Endothelial cell of umbilical vein (primary cell): ENCODE measurements at regions of chr14 and their contacts with region 1.

Region 1: DNA sequence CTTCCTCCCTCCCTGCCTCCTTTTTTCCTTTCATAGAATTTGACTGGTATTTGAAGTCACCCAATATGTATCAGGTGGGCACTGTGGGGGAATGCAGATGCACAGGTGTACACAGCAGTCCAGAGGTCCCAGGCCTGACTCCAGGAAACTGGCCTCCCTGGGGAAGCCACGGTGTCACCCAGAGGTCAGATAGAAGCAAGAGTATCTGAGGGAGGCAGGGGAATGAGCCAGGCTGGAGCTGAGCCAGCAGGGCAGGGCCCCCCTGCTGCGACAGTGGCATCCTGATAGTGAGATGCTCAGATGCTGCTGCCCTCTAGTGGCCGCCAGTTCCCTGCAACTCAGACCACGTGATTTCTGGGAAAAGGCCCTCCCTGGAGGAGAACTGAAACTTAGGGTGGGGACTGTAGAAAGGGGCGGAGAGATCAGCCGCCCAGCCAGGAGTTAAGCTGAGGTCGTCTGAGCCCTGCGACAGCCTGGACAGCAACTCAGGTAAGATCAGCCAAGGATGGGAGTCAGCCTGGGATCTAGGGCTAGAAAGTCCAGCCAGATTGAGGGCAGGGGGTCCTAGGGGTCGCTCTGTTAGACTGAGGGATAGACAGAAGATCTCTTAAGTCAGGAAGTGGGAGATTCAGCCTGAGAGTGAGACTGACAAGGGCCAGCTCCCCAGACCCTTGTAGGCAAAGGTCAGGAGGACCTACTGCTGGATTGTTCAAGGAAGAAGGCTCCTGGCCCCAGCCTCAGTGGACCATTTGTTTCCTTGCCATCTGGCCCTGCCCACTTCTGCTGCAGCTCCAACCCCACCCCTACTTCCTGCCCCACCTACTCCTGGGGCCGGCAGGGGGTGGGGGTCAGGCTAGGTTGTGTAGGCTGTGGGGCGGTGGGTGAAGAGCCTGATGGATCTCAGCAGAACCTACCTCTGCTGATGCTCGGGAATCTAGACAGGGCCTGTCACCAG is at the start of gene IRF9:
- DNase-seq: peak; percentile 97
- H3K4me3 ChIP-seq: peak within 1 kb of the TSS; percentile 37 to 79 (median 67)
- H3K27ac ChIP-seq: peak within 1 kb of the TSS; percentile 78
- H3K4me1 ChIP-seq: peaks cover 16% of the 10 kb centered on the region
- H3K27me3 ChIP-seq: no peaks in the 10 kb centered on the region
- CTCF ChIP-seq: peak; percentile 95 to 97
- POLR2A ChIP-seq: peak; percentile 88
- total RNA-seq, gene IRF9: 33.2 and 46.1 TPM in 2 replicates

Region 2: GRCh38 chr14:24086193-24086955 is 74.8 kb before region 1 on chr14:
- CTCF ChIA-PET with region 1: interaction called, 8 read pairs
- POLR2A ChIA-PET with region 1: no interaction called
- dilution Hi-C with region 1: no loop called
- intact Hi-C with region 1: loop called (anchors 1 kb)
- DNase-seq: no peak
- H3K4me3 ChIP-seq: no peak overlapping the region
- H3K27ac ChIP-seq: no peak overlapping the region
- H3K4me1 ChIP-seq: no peaks in the 10 kb centered on the region
- H3K27me3 ChIP-seq: peaks cover 14 to 20% of the 10 kb centered on the region in 2 experiments
- CTCF ChIP-seq: no peak
- POLR2A ChIP-seq: no peak

Region 3: GRCh38 chr14:24114536-24115450 is 46.3 kb before region 1 on chr14 and contains the starts of genes DCAF11 and NRL:
- CTCF ChIA-PET with region 1: interaction called, 16 read pairs
- POLR2A ChIA-PET with region 1: no interaction called
- dilution Hi-C with region 1: no loop called
- intact Hi-C with region 1: loop called (anchors 1 kb)
- DNase-seq: peak; percentile 100
- H3K4me3 ChIP-seq: peak within 1 kb of the TSS; percentile 46 to 92 (median 84)
- H3K27ac ChIP-seq: peak within 1 kb of the TSS; percentile 88
- H3K4me1 ChIP-seq: peaks cover 13% of the 10 kb centered on the region
- H3K27me3 ChIP-seq: no peaks in the 10 kb centered on the region
- CTCF ChIP-seq: no peak
- POLR2A ChIP-seq: peak; percentile 39
- total RNA-seq, gene DCAF11: 32.1 and 38.5 TPM in 2 replicates
- total RNA-seq, gene NRL: 0.62 and 0.71 TPM in 2 replicates

Region 4: DNA sequence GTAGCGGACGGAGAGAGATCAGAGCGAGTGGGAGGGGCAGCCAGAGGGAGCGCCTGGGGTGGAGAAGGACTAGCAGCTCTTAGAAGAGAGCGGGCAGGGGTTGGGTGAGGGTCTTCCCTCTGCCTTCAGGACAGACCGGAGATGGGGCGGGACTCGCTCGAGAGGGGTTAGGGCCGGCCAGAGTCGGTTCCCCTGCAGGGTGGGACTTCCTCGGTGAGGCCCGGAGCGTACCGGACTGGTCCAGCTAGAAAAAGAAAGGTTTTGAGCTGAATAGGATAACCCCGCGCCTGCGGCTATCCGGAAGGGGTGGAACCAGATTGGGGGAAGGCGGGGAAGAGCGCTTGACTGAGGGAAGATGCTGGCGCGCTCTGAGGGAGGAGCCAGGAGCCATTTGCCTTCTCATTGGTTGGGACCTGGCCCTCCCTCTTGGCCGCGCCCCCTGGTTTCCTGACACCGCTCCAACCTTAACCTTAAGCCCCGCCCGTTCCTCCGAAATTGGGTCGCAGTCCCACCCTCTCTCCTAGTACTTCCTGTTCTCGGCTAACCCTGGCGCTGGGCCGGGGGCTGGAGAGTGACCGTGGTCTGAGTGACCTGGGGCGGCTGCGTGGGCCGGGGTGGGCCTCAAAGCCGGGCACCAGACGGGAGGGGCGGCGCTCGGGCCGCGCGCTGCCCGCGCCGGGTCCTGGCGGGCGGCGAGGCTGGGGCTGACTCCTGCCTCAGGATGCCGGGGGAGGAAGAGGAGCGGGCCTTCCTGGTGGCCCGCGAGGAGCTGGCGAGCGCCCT is 14.0 kb before region 1 on chr14 and contains the start of gene RNF31:
- CTCF ChIA-PET with region 1: interaction called, 63 read pairs
- POLR2A ChIA-PET with region 1: interaction called, 6 read pairs
- dilution Hi-C with region 1: no loop called
- intact Hi-C with region 1: loop called (anchors 1 kb)
- DNase-seq: peak; percentile 97
- H3K4me3 ChIP-seq: peak within 1 kb of the TSS; percentile 59 to 86 (median 79)
- H3K27ac ChIP-seq: peak within 1 kb of the TSS; percentile 52
- H3K4me1 ChIP-seq: peaks cover 17% of the 10 kb centered on the region
- H3K27me3 ChIP-seq: no peaks in the 10 kb centered on the region
- CTCF ChIP-seq: no peak
- POLR2A ChIP-seq: peak; percentile 75
- total RNA-seq, gene RNF31: 66.5 and 69.7 TPM in 2 replicates

Region 5: GRCh38 chr14:24215495-24216344 is 54.6 kb after region 1 on chr14 and contains the start of gene MDP1:
- CTCF ChIA-PET with region 1: interaction called, 5 read pairs
- POLR2A ChIA-PET with region 1: no interaction called
- dilution Hi-C with region 1: no loop called
- intact Hi-C with region 1: loop called (anchors 1 kb)
- DNase-seq: peak; percentile 91
- H3K4me3 ChIP-seq: peak within 1 kb of the TSS; percentile 57 to 69 (median 64)
- H3K27ac ChIP-seq: peak within 1 kb of the TSS; percentile 61
- H3K4me1 ChIP-seq: peaks cover 11% of the 10 kb centered on the region
- H3K27me3 ChIP-seq: no peaks in the 10 kb centered on the region
- CTCF ChIP-seq: peak; percentile 84 to 86
- POLR2A ChIP-seq: peak; percentile 88
- total RNA-seq, gene MDP1: 8.1 and 9.9 TPM in 2 replicates

Region 6: GRCh38 chr14:24848102-24848820 is 687.1 kb after region 1 on chr14:
- CTCF ChIA-PET with region 1: no interaction called
- POLR2A ChIA-PET with region 1: no interaction called
- dilution Hi-C with region 1: no loop called
- intact Hi-C with region 1: no loop called
- DNase-seq: no peak
- H3K4me3 ChIP-seq: no peak overlapping the region
- H3K27ac ChIP-seq: no peak overlapping the region
- H3K4me1 ChIP-seq: no peaks in the 10 kb centered on the region
- H3K27me3 ChIP-seq: no peaks in the 10 kb centered on the region
- CTCF ChIP-seq: no peak
- POLR2A ChIP-seq: no peak